Caco-2 (cell line): ENCODE measurements at regions of chr9 and their contacts with region 1.

Region 1: GRCh38 chr9:71249729-71250317 is 128.4 kb upstream of the TRPM3 start:
- DNase-seq: peak; percentile 2 to 18
- H3K4me3 ChIP-seq: no peak overlapping the region
- H3K4me3 Mint-ChIP-seq: no peak overlapping the region
- H3K27ac Mint-ChIP-seq: no peak overlapping the region
- H3K4me1 ChIP-seq: no peaks in the 10 kb centered on the region
- H3K4me1 Mint-ChIP-seq: no peaks in the 10 kb centered on the region
- H3K27me3 ChIP-seq: no peaks in the 10 kb centered on the region
- H3K27me3 Mint-ChIP-seq: peaks cover 4% of the 10 kb centered on the region
- CTCF ChIP-seq: peak in 1 of 2 experiments; percentile 39

Region 2: DNA sequence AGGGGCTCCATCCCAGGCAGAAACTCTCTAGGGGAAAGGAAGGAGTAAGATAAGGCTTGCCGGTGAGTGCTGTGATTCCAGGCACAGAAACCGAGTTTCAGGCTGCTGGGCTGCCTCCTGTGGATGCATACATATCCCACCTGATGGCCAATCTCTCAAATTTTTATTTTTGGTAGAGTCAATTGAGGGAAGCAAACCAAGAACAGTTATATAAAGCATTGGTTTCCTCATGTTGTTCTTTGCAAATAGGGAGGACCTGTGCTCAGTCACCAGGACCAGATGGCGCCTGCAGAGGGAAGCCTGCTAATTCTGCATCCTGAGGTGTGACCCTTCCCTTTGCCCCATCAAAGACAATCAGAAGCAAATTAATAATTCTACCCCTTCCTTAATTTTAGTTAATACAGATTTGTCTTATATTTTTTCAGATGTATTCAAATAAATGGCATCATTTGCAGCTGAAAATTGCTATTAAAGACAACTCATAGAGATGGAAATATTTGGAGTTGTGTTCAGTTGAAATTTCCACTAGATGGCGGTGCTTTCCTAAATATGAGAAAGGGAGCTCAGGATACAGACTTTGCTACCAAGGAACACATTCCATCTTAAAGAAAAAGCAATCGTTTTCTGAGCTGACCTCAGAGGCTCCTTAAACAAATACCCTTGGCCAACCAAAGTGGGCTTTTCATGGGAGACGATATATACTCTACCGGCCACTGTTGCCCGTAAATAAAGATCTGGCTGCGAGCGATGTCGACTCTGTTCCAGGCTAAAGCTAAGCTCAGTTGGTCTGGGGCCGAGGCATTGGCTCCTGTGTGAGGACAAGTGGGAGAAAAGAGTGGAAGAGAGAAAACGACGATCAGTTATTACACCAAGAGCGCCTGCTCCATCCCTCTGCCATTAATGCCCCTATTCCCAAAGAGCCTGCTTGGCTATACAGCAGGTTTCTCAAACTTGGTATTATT is 609.7 kb before region 1 on chr9:
- CTCF ChIA-PET with region 1: interaction called, 3 read pairs
- POLR2A ChIA-PET with region 1: no interaction called
- intact Hi-C with region 1: loop called (anchors 2 kb)
- DNase-seq: peak in 1 of 2 experiments; percentile 0
- H3K4me3 ChIP-seq: no peak overlapping the region
- H3K4me3 Mint-ChIP-seq: no peak overlapping the region
- H3K27ac Mint-ChIP-seq: no peak overlapping the region
- H3K4me1 ChIP-seq: no peaks in the 10 kb centered on the region
- H3K4me1 Mint-ChIP-seq: no peaks in the 10 kb centered on the region
- H3K27me3 ChIP-seq: no peaks in the 10 kb centered on the region
- H3K27me3 Mint-ChIP-seq: no peaks in the 10 kb centered on the region
- CTCF ChIP-seq: no peak

Region 3: GRCh38 chr9:70924895-70925547 is 324.8 kb before region 1 on chr9:
- CTCF ChIA-PET with region 1: no interaction called
- POLR2A ChIA-PET with region 1: no interaction called
- intact Hi-C with region 1: loop called (anchors 1 kb)
- DNase-seq: peak; percentile 13 to 19
- H3K4me3 ChIP-seq: no peak overlapping the region
- H3K4me3 Mint-ChIP-seq: no peak overlapping the region
- H3K27ac Mint-ChIP-seq: no peak overlapping the region
- H3K4me1 ChIP-seq: no peaks in the 10 kb centered on the region
- H3K4me1 Mint-ChIP-seq: no peaks in the 10 kb centered on the region
- H3K27me3 ChIP-seq: no peaks in the 10 kb centered on the region
- H3K27me3 Mint-ChIP-seq: no peaks in the 10 kb centered on the region
- CTCF ChIP-seq: peak in 1 of 2 experiments; percentile 38

Region 4: GRCh38 chr9:71001780-71002386 is 247.9 kb before region 1 on chr9:
- CTCF ChIA-PET with region 1: no interaction called
- POLR2A ChIA-PET with region 1: no interaction called
- intact Hi-C with region 1: loop called (anchors 10 kb)
- DNase-seq: peak; percentile 9 to 18
- H3K4me3 ChIP-seq: no peak overlapping the region
- H3K4me3 Mint-ChIP-seq: no peak overlapping the region
- H3K27ac Mint-ChIP-seq: no peak overlapping the region
- H3K4me1 ChIP-seq: no peaks in the 10 kb centered on the region
- H3K4me1 Mint-ChIP-seq: no peaks in the 10 kb centered on the region
- H3K27me3 ChIP-seq: no peaks in the 10 kb centered on the region
- H3K27me3 Mint-ChIP-seq: no peaks in the 10 kb centered on the region
- CTCF ChIP-seq: peak; percentile 15 to 22

Region 5: GRCh38 chr9:71431931-71432330 is 182.1 kb after region 1 on chr9:
- CTCF ChIA-PET with region 1: no interaction called
- POLR2A ChIA-PET with region 1: no interaction called
- intact Hi-C with region 1: no loop called
- DNase-seq: no peak
- H3K4me3 ChIP-seq: no peak overlapping the region
- H3K4me3 Mint-ChIP-seq: no peak overlapping the region
- H3K27ac Mint-ChIP-seq: no peak overlapping the region
- H3K4me1 ChIP-seq: no peaks in the 10 kb centered on the region
- H3K4me1 Mint-ChIP-seq: no peaks in the 10 kb centered on the region
- H3K27me3 ChIP-seq: no peaks in the 10 kb centered on the region
- H3K27me3 Mint-ChIP-seq: no peaks in the 10 kb centered on the region
- CTCF ChIP-seq: no peak